AG04449 (cell line): ENCODE measurements at regions of chr2 and their contacts with region 1.

Region 1: DNA sequence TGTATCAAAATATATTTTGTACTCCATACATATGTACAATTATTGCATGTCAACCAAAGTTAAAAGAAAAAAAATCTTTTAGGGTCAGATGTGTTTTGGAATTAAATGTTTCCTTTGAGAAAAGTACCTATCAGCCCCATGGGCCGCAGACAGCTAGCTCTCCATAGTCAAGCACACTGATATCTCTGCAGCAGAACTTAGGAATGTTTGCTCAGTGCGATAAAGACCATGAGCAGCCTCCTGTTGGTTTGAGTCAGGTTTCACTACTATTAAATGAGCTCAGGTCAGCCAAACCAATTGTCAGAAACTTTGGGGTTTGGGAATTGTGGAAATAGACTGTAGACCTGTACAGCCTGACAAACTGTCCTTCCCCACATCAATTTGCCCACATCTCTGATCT is 33.7 kb downstream of the LCT start:
- DNase-seq: no peak
- H3K4me3 ChIP-seq: no peak overlapping the region
- CTCF ChIP-seq: no peak

Region 2: DNA sequence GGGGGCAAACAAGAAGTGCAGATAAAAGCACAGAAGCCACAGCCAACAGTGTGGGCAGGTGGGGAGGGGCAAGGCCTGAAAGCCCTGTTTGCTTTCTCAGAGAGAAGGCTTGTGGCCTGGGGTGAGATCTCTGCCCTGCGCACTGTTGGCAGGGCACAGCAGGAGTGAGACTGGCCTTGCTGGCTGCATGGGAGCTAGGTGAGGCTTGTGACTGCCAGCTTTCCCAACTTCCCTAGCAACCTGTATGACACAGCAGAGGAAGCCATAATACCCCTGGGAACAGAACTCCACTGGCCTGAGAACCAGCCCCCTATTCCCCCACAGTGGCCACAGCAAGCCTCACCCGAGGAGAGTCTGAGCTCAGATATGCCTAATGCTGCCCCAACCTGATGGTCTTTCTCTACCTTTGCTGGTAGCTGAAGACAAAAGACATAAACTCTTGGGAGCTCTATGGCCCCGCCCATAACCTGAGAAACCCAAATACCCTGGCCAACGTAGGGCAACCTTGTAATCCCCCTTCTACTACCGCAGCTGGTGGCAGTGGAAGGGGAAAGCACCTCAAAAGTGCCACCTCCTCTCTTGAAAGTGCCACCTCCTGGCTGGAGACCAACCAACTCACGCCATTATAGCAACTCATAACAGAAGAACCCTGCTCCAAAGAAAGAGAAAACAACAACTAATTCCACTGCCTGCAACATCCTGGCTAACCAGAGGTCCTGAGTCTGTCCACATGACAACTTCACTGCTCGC is 10.7 kb before region 1 on chr2:
- CTCF ChIA-PET with region 1: interaction called, 127 read pairs
- POLR2A ChIA-PET with region 1: no interaction called
- DNase-seq: no peak
- H3K4me3 ChIP-seq: no peak overlapping the region
- CTCF ChIP-seq: no peak